GM10248 (cell line): ENCODE measurements at regions of chr9 and their contacts with region 1.

Region 1: GRCh38 chr9:72454871-72455491 is 66.4 kb upstream of the TMC1 start:
- DNase-seq: no peak
- CTCF ChIP-seq: no peak

Region 2: DNA sequence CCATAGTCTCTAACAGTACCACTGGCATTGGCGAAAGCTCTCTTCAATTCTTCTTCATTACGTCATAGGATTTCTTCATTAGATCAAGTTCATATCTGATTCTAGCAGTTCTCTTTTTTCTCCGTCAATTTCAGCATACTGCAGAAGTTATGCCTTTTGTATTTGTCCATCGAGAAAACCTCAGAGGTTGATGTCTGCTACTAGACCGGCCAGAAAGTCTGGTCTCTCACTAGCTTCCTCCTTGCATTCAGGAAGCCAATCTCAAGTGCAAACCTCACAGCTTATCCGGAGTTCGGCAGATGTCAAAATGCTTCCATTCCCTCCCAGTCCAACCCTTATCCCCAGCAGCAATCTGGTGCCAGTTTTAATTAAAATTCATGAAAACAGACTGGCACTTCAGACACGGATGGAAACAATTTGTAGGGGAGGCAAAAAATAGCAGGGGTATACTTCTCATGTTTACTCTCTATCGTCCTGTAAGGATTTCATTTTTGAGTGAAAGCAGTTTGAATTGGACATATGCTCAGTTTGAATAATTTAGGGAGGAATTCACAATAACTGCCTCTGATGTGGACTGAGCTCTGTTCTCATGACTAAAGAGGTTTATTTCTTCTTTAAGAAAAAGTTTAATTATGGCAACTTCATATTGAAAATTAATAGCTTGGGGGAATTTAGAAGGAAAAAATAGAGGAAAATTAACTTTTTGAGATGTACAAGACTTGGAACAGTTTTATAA is 10.0 kb after region 1 on chr9:
- CTCF ChIA-PET with region 1: interaction called, 10 read pairs
- POLR2A ChIA-PET with region 1: interaction called, 3 read pairs
- DNase-seq: no peak
- CTCF ChIP-seq: no peak